ENCODE measurements at regions of chr4 and their contacts with region 1.

Region 1: GRCh38 chr4:85968945-85969819 is 390.7 kb downstream of the MAPK10 start:
- DNase-seq: no peak
- ATAC-seq: peak; percentile 74
- H3K4me3 ChIP-seq: no peak overlapping the region
- H3K27ac ChIP-seq: no peak overlapping the region
- H3K4me1 ChIP-seq: no peaks in the 10 kb centered on the region
- H3K27me3 ChIP-seq: no peaks in the 10 kb centered on the region
- CTCF ChIP-seq: peak; percentile 45 to 79 (median 66)
- POLR2A ChIP-seq: no peak
- RAD21 ChIP-seq: peak; percentile 76

Region 2: GRCh38 chr4:85756938-85757337 is 212.2 kb before region 1 on chr4:
- CTCF ChIA-PET with region 1: no interaction called
- POLR2A ChIA-PET with region 1: no interaction called
- RAD21 ChIA-PET with region 1: no interaction called
- intact Hi-C with region 1: loop called (anchors 1 kb)
- DNase-seq: no peak
- ATAC-seq: peak; percentile 80
- H3K4me3 ChIP-seq: no peak overlapping the region
- H3K27ac ChIP-seq: no peak overlapping the region
- H3K4me1 ChIP-seq: no peaks in the 10 kb centered on the region
- H3K27me3 ChIP-seq: no peaks in the 10 kb centered on the region
- CTCF ChIP-seq: peak; percentile 35 to 52 (median 36); a peak in 5 of 6 replicates
- POLR2A ChIP-seq: no peak
- RAD21 ChIP-seq: peak; percentile 47

Region 3: GRCh38 chr4:85979276-85979675 is 10.1 kb after region 1 on chr4:
- CTCF ChIA-PET with region 1: interaction called, 13 read pairs
- POLR2A ChIA-PET with region 1: no interaction called
- RAD21 ChIA-PET with region 1: no interaction called
- intact Hi-C with region 1: no loop called
- DNase-seq: no peak
- ATAC-seq: no peak
- H3K4me3 ChIP-seq: no peak overlapping the region
- H3K27ac ChIP-seq: no peak overlapping the region
- H3K4me1 ChIP-seq: no peaks in the 10 kb centered on the region
- H3K27me3 ChIP-seq: no peaks in the 10 kb centered on the region
- CTCF ChIP-seq: no peak
- POLR2A ChIP-seq: no peak
- RAD21 ChIP-seq: no peak

Measured in HCT116 (cell line).